Calu3 (cell line): ENCODE measurements at regions of chr1 and their contacts with region 1.

Region 1: GRCh38 chr1:95233737-95234500 is at the start of gene RWDD3:
- DNase-seq: peak; percentile 97
- H3K4me3 Mint-ChIP-seq: peak within 1 kb of the TSS; percentile 91
- H3K27ac Mint-ChIP-seq: peak within 1 kb of the TSS; percentile 94
- H3K4me1 Mint-ChIP-seq: peaks cover 55% of the 10 kb centered on the region
- H3K27me3 Mint-ChIP-seq: no peaks in the 10 kb centered on the region
- CTCF ChIP-seq: peak; percentile 84
- total RNA-seq, gene RWDD3: 23.3 and 25.2 TPM in 2 replicates

Region 2: DNA sequence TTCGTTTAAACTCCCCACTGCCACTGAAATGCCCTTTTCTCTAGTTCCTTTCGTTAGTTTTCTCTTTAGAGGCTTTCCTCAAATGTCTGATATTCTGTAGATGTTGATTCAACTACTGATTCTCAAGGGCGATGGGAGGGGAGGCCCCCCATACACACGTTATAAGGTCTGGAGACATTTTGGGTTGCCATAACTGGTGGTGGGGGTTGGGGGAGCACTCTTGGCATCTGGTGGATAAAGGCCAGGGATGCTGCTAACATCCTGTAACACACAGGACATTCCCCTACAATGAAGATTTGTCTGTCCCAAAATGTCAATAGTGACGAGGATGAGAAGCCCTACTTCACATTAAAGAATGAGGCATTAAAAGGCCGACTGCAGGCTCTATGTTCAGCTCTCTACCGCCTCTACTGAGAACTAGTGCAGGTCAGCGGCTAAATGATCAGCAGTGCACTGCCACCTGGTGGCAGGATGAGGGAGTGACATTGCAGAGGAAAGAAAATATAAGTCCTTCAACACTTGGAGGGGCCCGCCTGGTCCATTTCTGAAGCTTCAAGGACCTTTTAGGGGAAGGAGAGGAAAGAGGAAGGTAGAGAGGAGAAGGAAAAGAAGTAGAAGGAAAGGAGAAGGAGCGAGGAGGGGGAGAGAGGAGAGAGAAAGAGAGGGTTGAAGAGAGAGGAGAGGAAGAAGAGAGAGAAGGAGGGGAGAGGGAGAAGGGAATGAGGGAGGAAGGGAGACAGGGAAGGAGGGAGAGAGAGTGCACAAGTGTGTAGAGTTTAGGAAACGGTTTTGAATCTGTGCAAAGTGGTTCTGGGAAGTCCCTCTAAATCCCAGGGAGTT is 190.6 kb before region 1 on chr1:
- CTCF ChIA-PET with region 1: interaction called, 13 read pairs
- intact Hi-C with region 1: no loop called
- DNase-seq: peak; percentile 81
- H3K4me3 Mint-ChIP-seq: no peak overlapping the region
- H3K27ac Mint-ChIP-seq: no peak overlapping the region
- H3K4me1 Mint-ChIP-seq: peaks cover 10% of the 10 kb centered on the region
- H3K27me3 Mint-ChIP-seq: no peaks in the 10 kb centered on the region
- CTCF ChIP-seq: peak; percentile 98

Region 3: GRCh38 chr1:95072532-95073419 is 161.1 kb before region 1 on chr1 and contains the start of gene ALG14:
- CTCF ChIA-PET with region 1: interaction called, 14 read pairs
- intact Hi-C with region 1: loop called (anchors 5 kb)
- DNase-seq: peak; percentile 89
- H3K4me3 Mint-ChIP-seq: peak within 1 kb of the TSS; percentile 96
- H3K27ac Mint-ChIP-seq: peak within 1 kb of the TSS; percentile 87
- H3K4me1 Mint-ChIP-seq: peaks cover 36% of the 10 kb centered on the region
- H3K27me3 Mint-ChIP-seq: no peaks in the 10 kb centered on the region
- CTCF ChIP-seq: no peak
- total RNA-seq, gene ALG14: 5.8 and 7.0 TPM in 2 replicates

Region 4: GRCh38 chr1:95116580-95117206 is 117.2 kb before region 1 on chr1:
- CTCF ChIA-PET with region 1: interaction called, 21 read pairs
- intact Hi-C with region 1: loop called (anchors 2 kb)
- DNase-seq: peak; percentile 84
- H3K4me3 Mint-ChIP-seq: peak overlapping the region; percentile 71
- H3K27ac Mint-ChIP-seq: peak overlapping the region; percentile 45
- H3K4me1 Mint-ChIP-seq: peaks cover 33% of the 10 kb centered on the region
- H3K27me3 Mint-ChIP-seq: no peaks in the 10 kb centered on the region
- CTCF ChIP-seq: peak; percentile 70

Region 5: DNA sequence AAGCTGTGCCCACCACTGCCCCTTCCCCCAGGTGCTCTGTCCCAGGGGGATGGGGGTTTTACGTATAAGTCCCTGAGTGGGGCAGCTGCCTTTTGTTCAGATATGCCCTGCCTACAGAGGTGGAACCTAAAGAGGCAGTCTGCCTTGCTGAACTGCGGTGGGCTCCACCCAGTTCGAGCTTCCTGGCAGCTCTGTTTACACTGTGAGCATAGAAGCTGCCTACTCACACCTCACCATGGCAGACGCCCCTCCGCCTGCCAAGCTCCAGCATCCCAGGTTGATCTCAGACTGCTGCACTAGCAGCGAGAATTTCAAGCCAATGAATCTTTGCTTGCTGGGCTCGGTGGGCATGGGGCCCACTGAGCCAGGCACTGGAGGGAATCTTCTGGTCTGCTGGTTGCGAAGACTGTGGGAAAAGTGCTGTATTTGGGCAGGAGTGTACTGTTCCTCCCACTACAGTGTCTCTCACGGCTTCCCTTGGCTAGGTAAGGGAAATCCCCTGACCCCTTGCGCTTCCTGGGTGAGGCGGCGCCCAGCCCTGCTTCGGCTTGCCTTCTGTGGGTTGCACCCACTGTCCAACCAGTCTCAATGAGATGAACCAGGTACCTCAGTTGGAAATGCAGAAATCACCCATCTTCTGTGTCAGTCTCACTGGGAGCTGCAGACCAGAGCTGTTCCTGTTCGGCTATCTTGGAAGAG is 17.5 kb before region 1 on chr1:
- CTCF ChIA-PET with region 1: no interaction called
- intact Hi-C with region 1: no loop called
- DNase-seq: no peak
- H3K4me3 Mint-ChIP-seq: no peak overlapping the region
- H3K27ac Mint-ChIP-seq: no peak overlapping the region
- H3K4me1 Mint-ChIP-seq: peaks cover 13% of the 10 kb centered on the region
- H3K27me3 Mint-ChIP-seq: no peaks in the 10 kb centered on the region
- CTCF ChIP-seq: no peak

Region 6: GRCh38 chr1:95325349-95325748 is 91.4 kb after region 1 on chr1:
- CTCF ChIA-PET with region 1: no interaction called
- intact Hi-C with region 1: no loop called
- DNase-seq: no peak
- H3K4me3 Mint-ChIP-seq: no peak overlapping the region
- H3K27ac Mint-ChIP-seq: no peak overlapping the region
- H3K4me1 Mint-ChIP-seq: no peaks in the 10 kb centered on the region
- H3K27me3 Mint-ChIP-seq: no peaks in the 10 kb centered on the region
- CTCF ChIP-seq: no peak